Caco-2 (cell line): ENCODE measurements at regions of chr11 and their contacts with region 1.

Region 1: GRCh38 chr11:62855571-62856332 is 16.4 kb upstream of the WDR74 start:
- DNase-seq: peak; percentile 98 to 99
- H3K4me3 ChIP-seq: peak overlapping the region; percentile 92
- H3K4me3 Mint-ChIP-seq: peak overlapping the region; percentile 77
- H3K27ac Mint-ChIP-seq: peak overlapping the region; percentile 85
- H3K4me1 ChIP-seq: peaks cover 46% of the 10 kb centered on the region
- H3K4me1 Mint-ChIP-seq: peaks cover 45% of the 10 kb centered on the region
- H3K27me3 ChIP-seq: no peaks in the 10 kb centered on the region
- H3K27me3 Mint-ChIP-seq: no peaks in the 10 kb centered on the region
- CTCF ChIP-seq: no peak

Region 2: GRCh38 chr11:62811659-62812058 is 44.1 kb before region 1 on chr11:
- CTCF ChIA-PET with region 1: no interaction called
- POLR2A ChIA-PET with region 1: interaction called, 20 read pairs
- intact Hi-C with region 1: no loop called
- DNase-seq: no peak
- H3K4me3 ChIP-seq: no peak overlapping the region
- H3K4me3 Mint-ChIP-seq: no peak overlapping the region
- H3K27ac Mint-ChIP-seq: no peak overlapping the region
- H3K4me1 ChIP-seq: no peaks in the 10 kb centered on the region; the same call in 1 of the 2 replicates
- H3K4me1 Mint-ChIP-seq: no peaks in the 10 kb centered on the region
- H3K27me3 ChIP-seq: no peaks in the 10 kb centered on the region
- H3K27me3 Mint-ChIP-seq: no peaks in the 10 kb centered on the region
- CTCF ChIP-seq: no peak

Region 3: GRCh38 chr11:62831520-62832335 is 24.0 kb before region 1 on chr11 and contains the start of gene STX5:
- CTCF ChIA-PET with region 1: interaction called, 4 read pairs
- POLR2A ChIA-PET with region 1: interaction called, 32 read pairs
- intact Hi-C with region 1: no loop called
- DNase-seq: peak; percentile 99
- H3K4me3 ChIP-seq: peak within 1 kb of the TSS; percentile 66
- H3K4me3 Mint-ChIP-seq: peak within 1 kb of the TSS; percentile 90
- H3K27ac Mint-ChIP-seq: peak within 1 kb of the TSS; percentile 100
- H3K4me1 ChIP-seq: no peaks in the 10 kb centered on the region
- H3K4me1 Mint-ChIP-seq: peaks cover 5% of the 10 kb centered on the region
- H3K27me3 ChIP-seq: no peaks in the 10 kb centered on the region
- H3K27me3 Mint-ChIP-seq: no peaks in the 10 kb centered on the region
- CTCF ChIP-seq: no peak
- total RNA-seq, gene STX5: 39.9 and 44.2 TPM in 2 replicates

Region 4: GRCh38 chr11:62880803-62881578 is 25.2 kb after region 1 on chr11 and contains the start of gene SLC3A2:
- CTCF ChIA-PET with region 1: interaction called, 7 read pairs
- POLR2A ChIA-PET with region 1: interaction called, 24 read pairs
- intact Hi-C with region 1: loop called (anchors 1 kb)
- DNase-seq: peak; percentile 87 to 92
- H3K4me3 ChIP-seq: peak within 1 kb of the TSS; percentile 99
- H3K4me3 Mint-ChIP-seq: peak within 1 kb of the TSS; percentile 97
- H3K27ac Mint-ChIP-seq: peak within 1 kb of the TSS; percentile 99
- H3K4me1 ChIP-seq: peaks cover 51% of the 10 kb centered on the region
- H3K4me1 Mint-ChIP-seq: peaks cover 43% of the 10 kb centered on the region
- H3K27me3 ChIP-seq: no peaks in the 10 kb centered on the region
- H3K27me3 Mint-ChIP-seq: no peaks in the 10 kb centered on the region
- CTCF ChIP-seq: peak; percentile 77 to 78
- total RNA-seq, gene SLC3A2: 763 and 879 TPM in 2 replicates

Region 5: DNA sequence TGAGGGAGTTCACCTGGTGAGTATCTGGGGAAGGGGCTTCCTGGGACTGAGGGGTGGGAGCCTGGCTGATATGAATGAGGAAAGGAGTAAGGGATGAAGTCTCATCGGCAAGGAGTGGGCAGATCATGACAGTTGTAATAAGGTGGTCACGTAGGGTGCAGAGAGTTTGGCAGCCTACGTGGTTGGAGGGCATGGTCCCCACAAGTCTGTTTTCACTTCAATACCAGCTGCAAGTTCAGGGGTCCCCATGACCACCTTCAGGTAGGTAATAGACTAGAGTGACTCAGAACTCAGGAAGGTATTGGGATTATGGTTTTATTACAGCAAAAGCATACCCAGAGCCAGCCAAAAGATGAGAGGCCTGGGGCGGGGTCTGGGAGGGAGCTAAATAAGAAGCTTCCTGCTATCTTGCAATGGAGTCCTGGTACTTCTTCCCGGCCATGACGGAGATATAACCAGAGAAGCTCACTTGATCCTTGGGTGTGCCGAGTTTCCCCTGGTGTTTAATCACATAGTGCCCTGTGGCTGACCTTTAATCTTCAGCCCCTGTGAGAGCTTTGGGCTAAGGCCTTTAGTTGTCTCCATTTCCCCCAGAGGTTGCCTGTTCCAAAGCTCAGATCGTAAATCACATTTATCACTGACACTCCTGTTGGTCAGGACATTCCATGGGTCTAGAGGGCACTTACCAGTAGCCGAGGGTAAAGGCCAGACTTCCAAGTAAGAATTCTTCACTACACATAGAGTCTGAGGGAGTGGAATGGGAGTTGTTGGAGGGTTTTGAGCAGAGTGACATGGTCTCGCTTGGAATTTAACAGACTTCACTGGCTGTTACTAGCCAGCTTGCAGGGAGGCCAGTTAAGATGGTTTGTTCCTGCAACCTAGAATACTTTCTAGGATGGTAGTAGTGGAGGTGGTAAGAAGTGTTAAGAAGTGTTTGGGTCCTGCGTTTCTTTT is 34.0 kb after region 1 on chr11:
- CTCF ChIA-PET with region 1: no interaction called
- POLR2A ChIA-PET with region 1: interaction called, 15 read pairs
- intact Hi-C with region 1: no loop called
- DNase-seq: peak; percentile 90 to 97
- H3K4me3 ChIP-seq: no peak overlapping the region
- H3K4me3 Mint-ChIP-seq: peak overlapping the region; percentile 64
- H3K27ac Mint-ChIP-seq: peak overlapping the region; percentile 83
- H3K4me1 ChIP-seq: peaks cover 70% of the 10 kb centered on the region
- H3K4me1 Mint-ChIP-seq: peaks cover 59% of the 10 kb centered on the region
- H3K27me3 ChIP-seq: no peaks in the 10 kb centered on the region
- H3K27me3 Mint-ChIP-seq: no peaks in the 10 kb centered on the region
- CTCF ChIP-seq: no peak